ENCODE measurements at regions of chr16 and their contacts with region 1.

Region 1: DNA sequence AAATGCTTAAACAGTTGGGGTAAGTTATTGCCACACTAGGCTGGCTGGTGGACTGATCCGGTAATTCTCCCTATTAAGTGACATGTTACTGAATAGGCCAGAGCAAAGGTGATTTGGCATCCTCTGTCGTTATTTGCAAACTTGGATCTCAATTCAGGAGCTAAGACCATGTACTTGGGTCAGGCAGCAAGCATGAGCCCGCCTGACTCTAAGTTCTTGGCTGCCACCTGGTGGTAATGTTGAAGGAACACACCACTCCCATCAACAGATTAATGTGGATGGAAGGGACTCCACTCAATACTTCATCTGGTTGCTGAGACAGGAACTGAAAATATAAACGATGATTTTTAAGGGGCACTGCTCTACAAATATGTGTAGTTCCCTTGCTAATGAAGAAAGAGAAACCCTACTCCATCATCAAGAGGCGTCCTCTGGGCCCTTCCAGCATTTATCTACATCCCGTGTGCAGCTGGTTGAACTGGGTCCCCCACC is 70.8 kb downstream of the EMP2 start:
- DNase-seq: peak; percentile 83
- H3K4me3 ChIP-seq: no peak overlapping the region
- H3K27ac ChIP-seq: no peak overlapping the region
- H3K4me1 ChIP-seq: no peaks in the 10 kb centered on the region
- H3K27me3 ChIP-seq: no peaks in the 10 kb centered on the region
- CTCF ChIP-seq: peak; percentile 78

Region 2: DNA sequence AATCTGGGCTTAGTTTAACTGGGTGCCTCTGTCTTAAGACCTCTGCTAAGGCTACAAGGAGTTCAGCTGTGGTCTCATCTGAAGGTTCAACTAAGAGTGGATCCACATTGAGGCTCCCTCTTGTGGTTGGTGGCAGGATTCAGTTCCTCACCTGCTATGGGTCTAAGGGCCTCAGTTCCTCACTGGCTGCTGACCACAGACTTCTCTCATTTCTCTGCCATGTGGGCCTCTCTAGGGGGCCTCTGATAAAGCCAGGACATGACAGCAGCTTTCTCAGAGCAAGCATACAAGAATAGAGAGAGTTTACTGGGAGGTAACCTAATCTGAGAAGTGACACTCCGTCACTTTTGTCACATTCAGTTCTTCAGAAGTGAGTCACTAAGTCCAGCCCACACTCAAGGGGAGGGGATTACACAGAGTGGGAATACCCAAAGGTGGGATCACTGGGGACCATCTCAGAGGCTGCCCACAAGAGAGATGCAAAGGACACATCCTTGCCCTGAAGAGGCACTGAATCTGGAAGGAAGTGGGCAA is 1854.3 kb before region 1 on chr16:
- CTCF ChIA-PET with region 1: no interaction called
- POLR2A ChIA-PET with region 1: interaction called, 17 read pairs
- intact Hi-C with region 1: no loop called
- DNase-seq: peak; percentile 61
- H3K4me3 ChIP-seq: no peak overlapping the region
- H3K27ac ChIP-seq: peak overlapping the region; percentile 37
- H3K4me1 ChIP-seq: peaks cover 4% of the 10 kb centered on the region
- H3K27me3 ChIP-seq: no peaks in the 10 kb centered on the region
- CTCF ChIP-seq: peak; percentile 71

Region 3: GRCh38 chr16:10256784-10257641 is 252.6 kb before region 1 on chr16:
- CTCF ChIA-PET with region 1: interaction called, 4 read pairs
- POLR2A ChIA-PET with region 1: no interaction called
- intact Hi-C with region 1: loop called (anchors 1 kb)
- DNase-seq: peak; percentile 58
- H3K4me3 ChIP-seq: no peak overlapping the region
- H3K27ac ChIP-seq: no peak overlapping the region
- H3K4me1 ChIP-seq: peaks cover 4% of the 10 kb centered on the region
- H3K27me3 ChIP-seq: peaks cover 2% of the 10 kb centered on the region
- CTCF ChIP-seq: peak; percentile 86

Region 4: DNA sequence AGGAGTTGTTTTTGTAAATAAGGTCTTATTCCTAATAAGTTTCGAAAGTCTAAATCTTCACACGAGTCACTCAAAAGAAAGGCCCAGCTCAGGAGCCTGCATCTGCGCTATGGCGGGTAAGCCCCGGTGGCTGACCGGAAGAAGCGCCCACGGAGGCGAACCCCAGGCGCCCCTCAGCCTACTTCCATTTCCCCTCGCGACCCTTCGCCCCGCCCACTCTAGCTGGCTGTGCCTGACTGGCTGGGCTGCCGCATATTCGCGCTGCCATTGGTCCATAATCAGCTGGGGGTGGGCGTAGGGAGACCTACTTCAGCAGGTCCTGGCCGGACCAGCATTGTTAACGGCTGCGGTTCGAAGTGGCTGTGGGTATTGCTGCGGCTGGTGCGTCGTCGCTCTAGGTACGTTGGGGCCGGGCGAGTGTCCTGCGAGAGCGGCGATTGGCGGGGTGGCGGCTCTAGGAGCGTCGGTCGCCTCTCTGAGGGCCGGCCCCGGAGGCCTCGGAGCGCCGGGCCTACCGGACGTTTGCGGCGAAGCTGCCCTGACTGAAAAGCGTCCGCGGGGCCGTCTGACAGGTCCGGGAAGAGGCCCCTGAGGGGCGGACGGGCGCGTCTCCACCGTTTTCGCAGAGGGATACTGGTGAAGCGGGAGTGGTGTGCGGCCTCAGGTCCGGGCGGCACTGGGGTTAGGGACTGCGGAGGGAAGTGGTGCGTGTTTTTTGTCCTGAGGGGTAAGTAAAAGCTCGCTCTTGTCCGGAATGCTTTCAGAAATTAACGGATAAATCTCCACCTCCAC is 123.7 kb before region 1 on chr16 and contains the start of gene ATF7IP2:
- CTCF ChIA-PET with region 1: no interaction called
- POLR2A ChIA-PET with region 1: no interaction called
- intact Hi-C with region 1: loop called (anchors 10 kb)
- DNase-seq: peak; percentile 96
- H3K4me3 ChIP-seq: peak within 1 kb of the TSS; percentile 82
- H3K27ac ChIP-seq: peak within 1 kb of the TSS; percentile 89
- H3K4me1 ChIP-seq: no peaks in the 10 kb centered on the region
- H3K27me3 ChIP-seq: no peaks in the 10 kb centered on the region
- CTCF ChIP-seq: no peak
- total RNA-seq, gene ATF7IP2: 20.9 and 21.9 TPM in 2 replicates

Region 5: GRCh38 chr16:10737068-10737625 is 227.6 kb after region 1 on chr16:
- CTCF ChIA-PET with region 1: interaction called, 5 read pairs
- POLR2A ChIA-PET with region 1: no interaction called
- intact Hi-C with region 1: loop called (anchors 1 kb)
- DNase-seq: peak; percentile 73
- H3K4me3 ChIP-seq: no peak overlapping the region
- H3K27ac ChIP-seq: no peak overlapping the region
- H3K4me1 ChIP-seq: no peaks in the 10 kb centered on the region
- H3K27me3 ChIP-seq: no peaks in the 10 kb centered on the region
- CTCF ChIP-seq: peak; percentile 94

Measured in A673 (cell line).